Activated naive CD4-positive, alpha-beta T cell treated with anti-CD3 and anti-CD28 coated beads, Interleukin-2, amount 10 ng/mL, durations not matched to agents 7 days and 5 days (primary cell): ENCODE measurements at regions of chr1 and their contacts with region 1.

Region 1: GRCh38 chr1:7207875-7208646 is 422.8 kb downstream of the CAMTA1 start:
- DNase-seq: peak; percentile 50
- H3K4me3 Mint-ChIP-seq: no peak overlapping the region
- H3K27ac Mint-ChIP-seq: no peak overlapping the region
- H3K4me1 Mint-ChIP-seq: no peaks in the 10 kb centered on the region
- H3K27me3 Mint-ChIP-seq: peaks cover 9% of the 10 kb centered on the region

Region 2: GRCh38 chr1:6724516-6725141 is 483.4 kb before region 1 on chr1:
- CTCF ChIA-PET with region 1: interaction called, 10 read pairs
- DNase-seq: no peak
- H3K4me3 Mint-ChIP-seq: no peak overlapping the region
- H3K27ac Mint-ChIP-seq: no peak overlapping the region
- H3K4me1 Mint-ChIP-seq: no peaks in the 10 kb centered on the region
- H3K27me3 Mint-ChIP-seq: peaks cover 13% of the 10 kb centered on the region